ENCODE measurements at regions of chr17 and their contacts with region 1.

Region 1: GRCh38 chr17:81101614-81102306 is 63.5 kb upstream of the PVALEF start:
- DNase-seq: no peak
- H3K4me3 ChIP-seq: no peak overlapping the region
- H3K27me3 ChIP-seq: no peaks in the 10 kb centered on the region
- CTCF ChIP-seq: peak; percentile 100

Region 2: DNA sequence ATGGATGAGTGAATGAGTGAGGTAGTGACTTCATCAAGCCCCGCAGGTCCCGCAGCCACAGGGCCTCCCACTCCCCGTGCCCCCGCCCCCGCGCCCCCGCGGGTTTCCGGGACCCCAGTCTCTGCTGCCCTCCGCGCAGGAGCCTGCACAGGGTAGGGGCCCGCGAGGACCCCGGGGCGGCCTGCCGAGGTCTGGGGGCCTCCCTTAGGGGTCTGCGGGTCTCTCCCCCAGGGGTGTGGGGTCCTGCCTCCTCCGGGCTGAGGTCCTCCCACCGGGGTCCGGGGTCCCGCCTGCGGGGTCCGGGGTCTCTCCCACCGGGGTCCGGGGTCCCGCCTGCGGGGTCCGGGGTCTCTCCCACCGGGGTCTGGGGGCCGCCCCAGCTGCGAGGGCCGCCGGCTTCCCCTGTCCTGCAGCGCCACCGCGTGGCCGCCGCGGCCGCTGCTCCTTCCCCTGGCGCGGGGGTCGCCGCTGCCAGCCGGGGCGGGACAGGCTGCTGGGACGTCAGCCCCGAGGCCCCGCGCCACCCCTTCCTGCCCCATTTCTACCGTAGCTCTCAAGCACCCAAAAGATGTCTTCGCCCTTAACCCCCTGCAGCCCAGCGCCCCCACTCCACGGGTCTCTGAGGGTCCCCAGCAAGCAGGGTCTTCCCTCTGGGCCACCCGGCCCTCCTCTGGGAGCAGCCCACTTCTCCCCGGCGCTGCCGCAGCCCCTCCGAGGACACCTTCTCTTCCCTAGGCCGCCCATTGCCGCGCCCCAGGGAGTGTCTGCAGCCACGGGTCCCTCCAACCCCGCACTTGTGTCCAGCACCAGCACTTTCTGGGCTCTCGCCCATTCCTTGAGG is 120.5 kb before region 1 on chr17:
- CTCF ChIA-PET with region 1: interaction called, 13 read pairs
- POLR2A ChIA-PET with region 1: no interaction called
- DNase-seq: no peak
- H3K4me3 ChIP-seq: peak overlapping the region; percentile 20
- H3K27me3 ChIP-seq: no peaks in the 10 kb centered on the region
- CTCF ChIP-seq: peak; percentile 34

Region 3: GRCh38 chr17:80991645-80992076 is 110.1 kb before region 1 on chr17 and contains the start of gene CHMP6:
- CTCF ChIA-PET with region 1: interaction called, 54 read pairs
- POLR2A ChIA-PET with region 1: no interaction called
- DNase-seq: no peak
- H3K4me3 ChIP-seq: peak within 1 kb of the TSS; percentile 82
- H3K27me3 ChIP-seq: no peaks in the 10 kb centered on the region
- CTCF ChIP-seq: no peak
- polyA plus RNA-seq, gene CHMP6: 27.3 and 30.7 TPM in 2 replicates

Region 4: GRCh38 chr17:81018044-81018802 is 83.5 kb before region 1 on chr17:
- CTCF ChIA-PET with region 1: interaction called, 176 read pairs
- POLR2A ChIA-PET with region 1: no interaction called
- DNase-seq: no peak
- H3K4me3 ChIP-seq: no peak overlapping the region
- H3K27me3 ChIP-seq: no peaks in the 10 kb centered on the region
- CTCF ChIP-seq: no peak

Region 5: GRCh38 chr17:81118308-81119221 is 16.8 kb after region 1 on chr17:
- CTCF ChIA-PET with region 1: interaction called, 16 read pairs
- POLR2A ChIA-PET with region 1: no interaction called
- DNase-seq: no peak
- H3K4me3 ChIP-seq: peak overlapping the region; percentile 70
- H3K27me3 ChIP-seq: peaks cover 2% of the 10 kb centered on the region; the same call in 1 of the 2 replicates
- CTCF ChIP-seq: no peak